Activated T-helper 2 cell treated with anti-CD3 and anti-CD28 coated beads, Interferon-gamma antibody, Interleukin-2, Interleukin-4, amounts not matched to agents 10 μg/mL and 5 μg/mL and 100 μg/mL, durations not matched to agents 14 hours and 24 hours and 36 hours (primary cell): ENCODE measurements at regions of chr4 and their contacts with region 1.

Region 1: GRCh38 chr4:142719854-142720541 is 126.1 kb downstream of the INPP4B start:
- DNase-seq: no peak
- H3K4me3 Mint-ChIP-seq: no peak overlapping the region
- H3K27ac Mint-ChIP-seq: no peak overlapping the region
- H3K4me1 Mint-ChIP-seq: peaks cover 18% of the 10 kb centered on the region
- H3K27me3 Mint-ChIP-seq: no peaks in the 10 kb centered on the region

Region 2: DNA sequence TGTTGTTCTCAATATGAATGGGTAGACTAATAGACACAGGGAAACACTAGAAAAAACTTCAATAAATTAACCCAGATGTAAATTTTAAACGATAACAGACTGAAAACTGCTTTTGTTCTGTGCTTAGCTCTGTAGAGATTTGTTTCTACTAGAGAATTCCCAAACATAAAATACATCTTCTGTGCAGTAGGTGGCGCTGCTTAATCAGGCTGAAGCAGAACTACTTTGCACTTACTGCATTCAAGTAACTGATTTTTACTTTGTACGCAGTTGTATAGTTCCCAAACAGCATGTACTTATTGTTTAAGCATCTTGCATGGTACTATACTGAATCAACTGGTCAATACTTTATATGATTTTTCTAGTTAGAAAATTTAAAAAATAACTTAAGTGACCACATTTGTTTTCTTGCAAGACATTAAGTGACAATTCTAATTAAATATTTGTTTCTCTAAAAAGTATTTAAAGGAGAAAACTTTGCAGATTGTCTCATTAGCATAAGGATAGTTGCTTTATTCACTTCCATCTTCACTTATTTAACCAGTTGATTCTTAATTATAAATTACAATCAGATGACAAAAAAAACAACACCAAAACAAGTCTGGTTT is 593.0 kb before region 1 on chr4:
- intact Hi-C with region 1: loop called (anchors 1 kb)
- DNase-seq: peak; percentile 24
- H3K4me3 Mint-ChIP-seq: no peak overlapping the region
- H3K27ac Mint-ChIP-seq: no peak overlapping the region
- H3K4me1 Mint-ChIP-seq: peaks cover 20% of the 10 kb centered on the region
- H3K27me3 Mint-ChIP-seq: no peaks in the 10 kb centered on the region

Region 3: GRCh38 chr4:142282870-142283431 is 437.0 kb before region 1 on chr4:
- intact Hi-C with region 1: loop called (anchors 2 kb)
- DNase-seq: no peak
- H3K4me3 Mint-ChIP-seq: no peak overlapping the region
- H3K27ac Mint-ChIP-seq: no peak overlapping the region
- H3K4me1 Mint-ChIP-seq: peaks cover 15% of the 10 kb centered on the region
- H3K27me3 Mint-ChIP-seq: no peaks in the 10 kb centered on the region

Region 4: DNA sequence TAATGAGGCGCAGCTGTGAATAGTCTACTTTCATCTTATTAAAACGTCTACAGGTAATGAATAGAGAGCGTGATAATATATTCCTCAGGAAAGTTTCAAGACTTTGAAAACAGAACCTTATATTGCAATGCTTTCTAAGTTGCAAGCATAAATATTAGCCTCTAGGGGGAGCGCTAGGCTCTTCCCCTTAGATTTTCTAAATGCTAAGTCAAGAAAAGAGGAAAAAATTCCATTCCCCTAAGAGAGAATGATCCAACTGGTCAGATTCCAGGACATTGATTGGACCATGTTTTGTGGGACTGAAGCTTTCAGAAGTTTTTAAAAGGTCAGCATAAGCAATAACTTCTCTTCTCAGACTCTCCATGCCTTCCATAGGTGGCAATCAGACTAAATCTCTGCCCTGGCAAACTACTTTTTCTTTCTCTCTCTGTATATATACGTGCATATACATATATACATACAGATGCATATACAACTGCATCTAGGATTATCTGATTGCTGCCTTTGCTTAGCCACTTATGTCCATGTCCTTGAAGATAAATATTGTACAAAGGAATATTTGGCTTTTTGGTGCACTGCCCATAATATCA is 366.8 kb before region 1 on chr4:
- intact Hi-C with region 1: loop called (anchors 2 kb)
- DNase-seq: no peak
- H3K4me3 Mint-ChIP-seq: peak overlapping the region; percentile 15
- H3K27ac Mint-ChIP-seq: peak overlapping the region; percentile 88
- H3K4me1 Mint-ChIP-seq: peaks cover 89% of the 10 kb centered on the region
- H3K27me3 Mint-ChIP-seq: no peaks in the 10 kb centered on the region

Region 5: GRCh38 chr4:143473334-143474126 is 753.5 kb after region 1 on chr4:
- intact Hi-C with region 1: no loop called
- DNase-seq: no peak
- H3K4me3 Mint-ChIP-seq: no peak overlapping the region
- H3K27ac Mint-ChIP-seq: no peak overlapping the region
- H3K4me1 Mint-ChIP-seq: no peaks in the 10 kb centered on the region
- H3K27me3 Mint-ChIP-seq: peaks cover 4% of the 10 kb centered on the region